ENCODE measurements at regions of chr1 and their contacts with region 1.

Region 1: GRCh38 chr1:107430540-107431228 is 289.8 kb downstream of the NTNG1 start:
- DNase-seq: no peak
- H3K4me3 ChIP-seq: no peak overlapping the region
- H3K27ac ChIP-seq: no peak overlapping the region
- H3K4me1 ChIP-seq: peaks cover 0 to 6% (median 3%) of the 10 kb centered on the region in 4 experiments; a peak in 3 of 7 replicates
- H3K27me3 ChIP-seq: no peaks in the 10 kb centered on the region
- CTCF ChIP-seq: peak; percentile 13 to 90 (median 51)
- EP300 ChIP-seq: no peak
- POLR2A ChIP-seq: no peak
- RAD21 ChIP-seq: peak; percentile 46 to 65

Region 2: DNA sequence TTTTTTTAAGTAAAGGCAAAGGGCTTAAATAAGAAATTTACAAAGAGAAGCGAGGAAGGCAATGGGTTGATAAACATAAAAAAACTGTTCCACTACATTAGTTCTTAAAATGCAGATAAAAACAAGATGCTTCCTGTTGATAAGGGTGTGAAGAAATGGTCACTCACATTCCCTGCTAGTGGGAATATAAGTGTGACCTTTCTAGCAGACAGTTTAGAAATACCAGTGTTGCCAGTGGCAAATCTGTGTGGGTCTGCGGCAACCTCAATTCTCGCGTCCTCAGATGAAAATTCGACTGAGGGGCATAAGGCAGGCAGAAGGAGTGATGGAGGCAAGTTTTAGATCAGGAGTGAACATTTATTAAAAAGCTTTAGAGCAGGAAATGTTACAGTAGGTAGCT is 138.7 kb before region 1 on chr1:
- CTCF ChIA-PET with region 1: no interaction called
- POLR2A ChIA-PET with region 1: no interaction called
- DNase-seq: no peak
- H3K4me3 ChIP-seq: no peak overlapping the region
- H3K27ac ChIP-seq: no peak overlapping the region
- H3K4me1 ChIP-seq: no peaks in the 10 kb centered on the region
- H3K27me3 ChIP-seq: no peaks in the 10 kb centered on the region
- CTCF ChIP-seq: no peak
- EP300 ChIP-seq: no peak
- POLR2A ChIP-seq: no peak
- RAD21 ChIP-seq: no peak

Region 3: GRCh38 chr1:107389410-107390396 is 41.0 kb before region 1 on chr1:
- CTCF ChIA-PET with region 1: interaction called, 14 read pairs
- POLR2A ChIA-PET with region 1: no interaction called
- DNase-seq: no peak
- H3K4me3 ChIP-seq: no peak overlapping the region
- H3K27ac ChIP-seq: no peak overlapping the region
- H3K4me1 ChIP-seq: peaks cover 0 to 4% (median under 1%) of the 10 kb centered on the region in 4 experiments; a peak in 2 of 7 replicates
- H3K27me3 ChIP-seq: no peaks in the 10 kb centered on the region
- CTCF ChIP-seq: no peak
- EP300 ChIP-seq: no peak
- POLR2A ChIP-seq: no peak
- RAD21 ChIP-seq: no peak

Region 4: DNA sequence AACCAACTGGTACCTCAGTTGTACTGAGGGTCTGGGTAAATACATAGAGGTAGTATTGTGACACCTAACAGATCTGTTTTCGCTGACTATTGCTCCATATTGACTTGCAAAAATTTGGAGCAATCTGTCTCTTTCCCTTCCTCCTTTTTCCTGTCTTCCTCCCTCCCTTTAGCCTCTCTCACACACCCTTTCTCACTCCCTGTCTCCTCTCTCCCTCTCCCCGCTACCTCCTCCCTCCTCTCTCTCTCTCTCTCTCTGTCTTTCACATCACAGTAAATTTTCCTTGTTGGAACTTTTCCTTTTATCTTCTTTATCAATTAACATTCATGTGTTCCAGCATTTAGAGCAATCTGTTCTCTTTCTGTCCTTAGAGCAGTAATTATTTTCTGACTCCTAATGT is 11.7 kb before region 1 on chr1:
- CTCF ChIA-PET with region 1: interaction called, 24 read pairs
- POLR2A ChIA-PET with region 1: no interaction called
- DNase-seq: no peak
- H3K4me3 ChIP-seq: no peak overlapping the region
- H3K27ac ChIP-seq: no peak overlapping the region
- H3K4me1 ChIP-seq: peaks cover 0 to 13% (median 0%) of the 10 kb centered on the region in 4 experiments; a peak in 2 of 7 replicates
- H3K27me3 ChIP-seq: no peaks in the 10 kb centered on the region
- CTCF ChIP-seq: no peak
- EP300 ChIP-seq: no peak
- POLR2A ChIP-seq: no peak
- RAD21 ChIP-seq: no peak

Region 5: DNA sequence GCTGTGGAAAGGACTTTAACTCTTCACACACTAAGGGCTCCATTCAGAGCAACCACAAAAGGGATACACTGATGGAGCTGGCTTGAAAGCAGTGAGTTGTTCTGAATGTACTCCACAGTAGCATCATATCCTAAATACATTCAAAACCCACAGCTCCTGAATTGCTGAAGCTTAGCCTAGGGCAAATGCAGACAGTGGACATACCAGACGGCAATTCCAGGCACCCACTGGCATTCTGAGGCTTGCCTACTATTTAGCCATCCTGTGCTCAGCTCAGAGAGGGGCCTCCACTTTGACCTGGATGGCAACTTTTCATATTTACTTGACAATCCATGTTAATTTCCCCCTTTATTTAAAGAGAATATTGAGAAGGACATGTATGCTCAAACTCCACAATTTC is 13.6 kb after region 1 on chr1:
- CTCF ChIA-PET with region 1: interaction called, 18 read pairs
- POLR2A ChIA-PET with region 1: no interaction called
- DNase-seq: no peak
- H3K4me3 ChIP-seq: no peak overlapping the region
- H3K27ac ChIP-seq: no peak overlapping the region
- H3K4me1 ChIP-seq: peaks cover 0 to 5% (median 1%) of the 10 kb centered on the region in 4 experiments; a peak in 1 of 7 replicates
- H3K27me3 ChIP-seq: no peaks in the 10 kb centered on the region
- CTCF ChIP-seq: no peak
- EP300 ChIP-seq: no peak
- POLR2A ChIP-seq: no peak
- RAD21 ChIP-seq: no peak

Region 6: DNA sequence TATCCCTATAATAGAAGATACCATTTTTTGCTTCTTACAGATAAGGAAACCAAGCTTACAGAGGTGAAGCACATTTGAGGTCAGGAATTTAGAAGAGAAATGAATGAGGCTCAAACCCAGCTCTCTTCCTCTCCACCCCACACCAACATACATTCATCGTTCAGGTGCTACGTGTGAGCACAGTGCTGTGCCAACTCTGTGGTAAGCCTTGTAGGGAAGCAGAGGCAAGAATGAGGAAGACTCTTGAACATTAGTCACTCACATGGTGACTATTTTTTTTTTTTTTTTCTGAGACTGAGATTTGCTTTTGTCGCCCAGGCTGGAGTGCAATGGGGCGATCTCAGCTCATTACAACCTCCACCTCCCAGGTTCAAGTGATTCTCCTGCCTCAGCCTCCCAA is 24.1 kb after region 1 on chr1:
- CTCF ChIA-PET with region 1: interaction called, 15 read pairs
- POLR2A ChIA-PET with region 1: no interaction called
- DNase-seq: no peak
- H3K4me3 ChIP-seq: no peak overlapping the region
- H3K27ac ChIP-seq: no peak overlapping the region
- H3K4me1 ChIP-seq: no peaks in the 10 kb centered on the region
- H3K27me3 ChIP-seq: peaks cover 0 to 1% (median 0%) of the 10 kb centered on the region in 4 experiments; a peak in 2 of 7 replicates
- CTCF ChIP-seq: no peak
- EP300 ChIP-seq: no peak
- POLR2A ChIP-seq: no peak
- RAD21 ChIP-seq: no peak

Region 7: DNA sequence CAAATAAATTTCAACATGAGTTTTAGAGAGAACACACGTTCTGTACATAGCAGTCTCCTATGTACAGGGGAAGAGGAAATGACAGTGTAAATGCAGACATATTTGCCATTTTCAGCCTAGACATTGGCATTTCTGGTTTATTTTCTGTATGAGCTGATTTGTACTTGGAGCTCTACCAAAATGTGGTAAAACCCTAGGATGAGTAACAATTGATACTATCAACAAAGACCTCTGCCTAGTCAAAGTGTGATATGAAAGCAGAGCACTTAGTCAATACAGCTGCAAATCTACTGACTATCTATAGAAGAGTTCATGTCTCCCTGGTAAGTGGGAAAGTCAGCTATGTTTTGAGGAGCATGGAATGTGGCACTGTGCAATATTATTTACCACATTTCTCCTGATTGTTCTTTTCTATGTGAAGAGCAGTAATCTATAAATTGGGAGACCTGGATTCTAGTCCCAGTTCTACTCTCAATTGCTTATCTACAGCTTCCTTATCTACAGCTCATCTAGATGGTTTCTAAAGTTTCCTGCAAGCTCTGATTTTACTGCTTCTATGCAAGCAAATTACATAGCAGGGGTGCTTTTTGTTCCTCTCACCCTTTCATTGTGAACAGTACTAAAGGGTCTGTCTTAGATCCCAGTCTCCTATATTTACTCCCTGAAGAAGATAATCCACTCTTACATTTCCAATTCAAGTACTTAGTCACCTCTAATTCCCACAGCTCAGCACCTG is 44.4 kb after region 1 on chr1:
- CTCF ChIA-PET with region 1: interaction called, 52 read pairs
- POLR2A ChIA-PET with region 1: no interaction called
- DNase-seq: no peak
- H3K4me3 ChIP-seq: no peak overlapping the region
- H3K27ac ChIP-seq: no peak overlapping the region
- H3K4me1 ChIP-seq: no peaks in the 10 kb centered on the region
- H3K27me3 ChIP-seq: no peaks in the 10 kb centered on the region
- CTCF ChIP-seq: no peak
- EP300 ChIP-seq: no peak
- POLR2A ChIP-seq: no peak
- RAD21 ChIP-seq: no peak

Measured in H1 (cell line).